Caco-2 (cell line): ENCODE measurements at regions of chr9 and their contacts with region 1.

Region 1: DNA sequence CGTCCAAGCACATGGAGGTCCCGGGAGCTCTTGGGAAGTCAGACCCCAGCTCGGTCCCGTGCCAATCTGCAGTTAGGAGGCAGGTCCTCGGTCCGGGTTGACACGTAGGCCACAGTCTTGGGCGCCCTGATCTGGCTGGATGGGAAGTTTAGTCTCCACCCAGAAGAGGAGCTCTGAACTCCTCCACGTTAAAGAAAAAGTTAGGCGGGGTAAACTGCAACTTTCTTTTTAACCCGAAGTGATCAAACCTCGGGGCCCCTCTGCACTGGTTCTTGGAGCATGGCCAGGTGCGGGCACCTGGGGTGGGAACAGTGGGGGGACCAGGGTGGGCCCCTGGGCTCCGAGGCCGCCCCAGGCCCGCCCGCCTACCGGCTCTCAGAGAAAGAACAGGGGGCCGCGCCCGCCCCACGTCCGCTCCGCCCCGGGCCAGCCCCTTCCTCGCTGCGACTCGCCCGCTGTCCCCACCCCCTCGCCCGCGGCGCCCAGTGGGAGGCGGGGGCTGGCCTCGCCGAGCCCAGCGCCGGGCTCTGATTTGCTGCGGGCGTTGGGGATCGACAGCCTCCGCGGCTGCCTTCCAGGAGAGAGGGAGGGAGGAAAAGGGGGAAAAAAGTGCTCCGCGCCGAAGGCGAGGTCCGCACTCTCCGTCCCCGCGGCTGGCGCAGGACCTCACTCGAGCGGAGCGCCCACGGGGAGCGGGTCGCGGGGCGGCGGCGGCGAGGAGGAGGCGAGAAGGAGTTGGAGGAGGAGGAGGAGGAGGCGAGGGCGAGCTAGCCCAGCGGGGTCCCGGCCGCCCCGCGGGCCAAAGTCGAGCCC is at the start of gene COL5A1:
- DNase-seq: peak; percentile 90 to 94
- H3K4me3 ChIP-seq: peak within 1 kb of the TSS; percentile 62
- H3K4me3 Mint-ChIP-seq: peak within 1 kb of the TSS; percentile 82
- H3K27ac Mint-ChIP-seq: peak within 1 kb of the TSS; percentile 32
- H3K4me1 ChIP-seq: peaks cover 10% of the 10 kb centered on the region
- H3K4me1 Mint-ChIP-seq: peaks cover 4% of the 10 kb centered on the region
- H3K27me3 ChIP-seq: no peaks in the 10 kb centered on the region
- H3K27me3 Mint-ChIP-seq: no peaks in the 10 kb centered on the region
- CTCF ChIP-seq: peak in 1 of 2 experiments; percentile 21
- total RNA-seq, gene COL5A1: 4.8 and 5.7 TPM in 2 replicates

Region 2: DNA sequence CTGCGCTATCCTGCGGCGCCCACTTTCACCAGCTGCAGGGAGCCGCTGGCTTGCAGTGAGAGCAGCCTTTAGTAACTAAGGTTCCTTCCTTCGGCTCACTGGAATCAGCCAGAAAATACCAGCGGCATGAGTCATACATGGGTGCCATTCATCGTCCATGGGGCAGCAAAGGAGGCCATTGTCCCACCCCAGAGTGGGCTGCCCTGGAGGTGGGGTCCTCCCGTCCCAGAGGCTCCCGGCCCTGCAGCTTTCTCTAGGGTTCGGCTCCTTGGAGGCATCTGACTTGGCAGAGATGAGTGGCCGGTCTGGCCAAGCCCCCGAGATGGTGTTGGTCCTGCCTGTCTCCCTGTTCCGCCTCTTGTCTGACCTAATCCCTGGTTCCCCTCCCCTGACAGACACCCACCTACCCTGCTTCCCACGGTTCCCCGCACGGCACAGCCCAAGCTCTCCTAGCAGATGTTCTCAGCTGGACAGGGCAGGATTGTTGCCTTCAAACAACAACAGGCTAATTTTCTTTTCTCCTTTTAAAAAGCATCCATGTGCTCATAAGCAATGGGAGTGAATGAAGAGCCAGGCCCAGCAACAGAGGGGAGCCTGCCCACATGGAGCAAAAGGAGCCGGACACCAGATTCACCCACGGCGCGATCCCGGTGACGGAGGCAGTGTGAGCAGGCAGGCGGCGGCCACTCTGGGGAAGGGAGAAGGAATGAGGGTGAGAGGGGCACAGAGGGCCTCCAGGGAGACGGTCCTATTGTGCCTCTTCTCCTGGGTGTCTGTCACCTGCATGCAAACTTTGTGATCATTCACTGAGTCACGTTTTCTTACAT is 96.8 kb before region 1 on chr9:
- CTCF ChIA-PET with region 1: no interaction called
- POLR2A ChIA-PET with region 1: no interaction called
- intact Hi-C with region 1: loop called (anchors 10 kb)
- DNase-seq: peak; percentile 18 to 55
- H3K4me3 ChIP-seq: no peak overlapping the region
- H3K4me3 Mint-ChIP-seq: no peak overlapping the region
- H3K27ac Mint-ChIP-seq: no peak overlapping the region
- H3K4me1 ChIP-seq: peaks cover 9% of the 10 kb centered on the region
- H3K4me1 Mint-ChIP-seq: no peaks in the 10 kb centered on the region
- H3K27me3 ChIP-seq: no peaks in the 10 kb centered on the region
- H3K27me3 Mint-ChIP-seq: no peaks in the 10 kb centered on the region
- CTCF ChIP-seq: no peak

Region 3: GRCh38 chr9:134570151-134570621 is 71.2 kb before region 1 on chr9:
- CTCF ChIA-PET with region 1: no interaction called
- POLR2A ChIA-PET with region 1: no interaction called
- intact Hi-C with region 1: no loop called
- DNase-seq: peak in 1 of 2 experiments; percentile 26
- H3K4me3 ChIP-seq: no peak overlapping the region
- H3K4me3 Mint-ChIP-seq: no peak overlapping the region
- H3K27ac Mint-ChIP-seq: no peak overlapping the region
- H3K4me1 ChIP-seq: peaks cover under 1% of the 10 kb centered on the region; the same call in 1 of the 2 replicates
- H3K4me1 Mint-ChIP-seq: peaks cover under 1% of the 10 kb centered on the region
- H3K27me3 ChIP-seq: no peaks in the 10 kb centered on the region
- H3K27me3 Mint-ChIP-seq: no peaks in the 10 kb centered on the region
- CTCF ChIP-seq: no peak

Region 4: GRCh38 chr9:134602547-134603309 is 38.7 kb before region 1 on chr9:
- CTCF ChIA-PET with region 1: no interaction called
- POLR2A ChIA-PET with region 1: no interaction called
- intact Hi-C with region 1: loop called (anchors 5 kb)
- DNase-seq: peak; percentile 71 to 88
- H3K4me3 ChIP-seq: no peak overlapping the region
- H3K4me3 Mint-ChIP-seq: peak overlapping the region; percentile 5
- H3K27ac Mint-ChIP-seq: peak overlapping the region; percentile 15
- H3K4me1 ChIP-seq: peaks cover 23% of the 10 kb centered on the region
- H3K4me1 Mint-ChIP-seq: peaks cover 8% of the 10 kb centered on the region
- H3K27me3 ChIP-seq: no peaks in the 10 kb centered on the region
- H3K27me3 Mint-ChIP-seq: no peaks in the 10 kb centered on the region
- CTCF ChIP-seq: no peak

Region 5: DNA sequence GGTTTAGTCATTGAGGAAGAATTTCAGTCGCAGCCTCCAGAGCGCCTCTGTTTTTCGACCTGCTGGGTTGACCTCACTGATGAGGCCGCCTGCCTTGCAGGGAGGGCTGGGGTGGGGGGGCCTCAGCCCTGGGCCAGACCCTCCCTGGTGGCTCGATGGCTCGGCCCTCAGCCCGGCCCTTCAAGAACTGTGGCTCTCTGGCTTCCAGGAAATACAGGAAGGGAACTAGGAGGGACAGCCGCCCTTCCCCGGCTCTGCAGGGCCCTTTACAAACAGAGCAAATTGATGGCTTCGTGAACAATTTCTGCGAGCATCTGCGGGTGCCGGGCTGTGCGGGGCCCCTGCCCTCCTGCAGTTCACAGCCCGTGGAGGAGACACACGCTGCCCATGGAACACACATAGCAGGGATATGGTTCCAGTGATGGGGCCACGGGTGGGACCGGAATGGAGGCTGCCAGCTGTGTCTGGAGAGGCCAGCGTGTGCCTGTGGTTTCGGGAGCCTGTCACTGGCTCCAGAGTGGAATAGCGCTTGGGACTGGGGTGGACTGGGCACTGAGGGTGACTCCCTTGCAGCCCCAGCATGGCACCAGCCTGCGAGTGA is 39.8 kb after region 1 on chr9:
- CTCF ChIA-PET with region 1: no interaction called
- POLR2A ChIA-PET with region 1: no interaction called
- intact Hi-C with region 1: no loop called
- DNase-seq: no peak
- H3K4me3 ChIP-seq: no peak overlapping the region
- H3K4me3 Mint-ChIP-seq: no peak overlapping the region
- H3K27ac Mint-ChIP-seq: no peak overlapping the region
- H3K4me1 ChIP-seq: no peaks in the 10 kb centered on the region
- H3K4me1 Mint-ChIP-seq: no peaks in the 10 kb centered on the region
- H3K27me3 ChIP-seq: no peaks in the 10 kb centered on the region
- H3K27me3 Mint-ChIP-seq: peaks cover 7% of the 10 kb centered on the region
- CTCF ChIP-seq: no peak

Region 6: DNA sequence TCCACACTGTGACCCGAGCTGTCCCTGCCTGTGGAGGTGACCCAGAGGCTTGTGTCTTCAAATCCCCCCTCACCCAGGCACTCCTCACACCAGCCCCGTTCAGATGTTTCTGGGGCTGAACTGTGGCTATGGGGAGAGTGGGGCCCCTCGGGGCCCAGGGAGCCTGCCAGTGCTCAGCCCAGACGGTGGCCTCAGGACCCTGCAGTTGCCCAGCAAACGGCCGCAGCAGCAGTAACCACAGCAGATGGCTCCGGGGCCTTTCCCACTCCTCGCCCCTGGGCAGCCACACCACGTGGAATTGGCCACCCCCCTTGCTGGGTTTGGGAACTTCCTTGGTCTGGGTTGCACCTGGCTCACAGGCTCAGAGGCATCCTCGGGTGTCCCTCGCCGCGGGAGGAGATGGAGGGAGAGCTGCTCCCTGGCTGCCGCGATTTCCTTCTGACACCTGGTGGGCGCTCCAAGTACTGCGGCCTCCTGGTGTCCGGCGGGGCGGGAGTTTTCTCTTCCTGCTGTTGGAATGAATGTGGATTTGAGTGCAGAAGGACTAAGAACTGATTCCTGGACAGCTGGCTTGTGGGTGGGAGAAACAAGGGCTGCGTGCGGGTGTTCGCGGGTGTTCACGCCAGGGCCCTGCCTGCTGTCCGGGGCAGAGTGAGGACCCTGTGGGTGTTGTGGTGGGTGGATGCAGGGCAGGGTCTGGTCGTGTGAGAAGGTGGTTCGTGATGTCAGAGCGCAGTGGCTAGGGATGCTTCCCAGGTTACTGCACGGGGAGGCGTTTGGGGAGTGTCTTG is 97.7 kb after region 1 on chr9:
- CTCF ChIA-PET with region 1: no interaction called
- POLR2A ChIA-PET with region 1: no interaction called
- intact Hi-C with region 1: no loop called
- DNase-seq: peak; percentile 72 to 79
- H3K4me3 ChIP-seq: no peak overlapping the region
- H3K4me3 Mint-ChIP-seq: no peak overlapping the region
- H3K27ac Mint-ChIP-seq: no peak overlapping the region
- H3K4me1 ChIP-seq: no peaks in the 10 kb centered on the region
- H3K4me1 Mint-ChIP-seq: no peaks in the 10 kb centered on the region
- H3K27me3 ChIP-seq: no peaks in the 10 kb centered on the region
- H3K27me3 Mint-ChIP-seq: peaks cover 17% of the 10 kb centered on the region
- CTCF ChIP-seq: peak; percentile 90 to 93

Region 7: GRCh38 chr9:135300346-135301141 is 659.2 kb after region 1 on chr9:
- CTCF ChIA-PET with region 1: no interaction called
- POLR2A ChIA-PET with region 1: no interaction called
- intact Hi-C with region 1: no loop called
- DNase-seq: peak in 1 of 2 experiments; percentile 22
- H3K4me3 ChIP-seq: no peak overlapping the region
- H3K4me3 Mint-ChIP-seq: no peak overlapping the region
- H3K27ac Mint-ChIP-seq: no peak overlapping the region
- H3K4me1 ChIP-seq: no peaks in the 10 kb centered on the region
- H3K4me1 Mint-ChIP-seq: no peaks in the 10 kb centered on the region
- H3K27me3 ChIP-seq: no peaks in the 10 kb centered on the region; the same call in 1 of the 2 replicates
- H3K27me3 Mint-ChIP-seq: peaks cover 33% of the 10 kb centered on the region
- CTCF ChIP-seq: no peak